Mammary epithelial cell (primary cell): ENCODE measurements at regions of chr20 and their contacts with region 1.

Region 1: GRCh38 chr20:9359561-9360308 is 154.7 kb upstream of the LAMP5 start:
- DNase-seq: peak; percentile 30
- H3K4me3 ChIP-seq: no peak overlapping the region
- H3K27ac ChIP-seq: no peak overlapping the region
- H3K4me1 ChIP-seq: no peaks in the 10 kb centered on the region
- H3K27me3 ChIP-seq: no peaks in the 10 kb centered on the region
- CTCF ChIP-seq: peak; percentile 29 to 55

Region 2: DNA sequence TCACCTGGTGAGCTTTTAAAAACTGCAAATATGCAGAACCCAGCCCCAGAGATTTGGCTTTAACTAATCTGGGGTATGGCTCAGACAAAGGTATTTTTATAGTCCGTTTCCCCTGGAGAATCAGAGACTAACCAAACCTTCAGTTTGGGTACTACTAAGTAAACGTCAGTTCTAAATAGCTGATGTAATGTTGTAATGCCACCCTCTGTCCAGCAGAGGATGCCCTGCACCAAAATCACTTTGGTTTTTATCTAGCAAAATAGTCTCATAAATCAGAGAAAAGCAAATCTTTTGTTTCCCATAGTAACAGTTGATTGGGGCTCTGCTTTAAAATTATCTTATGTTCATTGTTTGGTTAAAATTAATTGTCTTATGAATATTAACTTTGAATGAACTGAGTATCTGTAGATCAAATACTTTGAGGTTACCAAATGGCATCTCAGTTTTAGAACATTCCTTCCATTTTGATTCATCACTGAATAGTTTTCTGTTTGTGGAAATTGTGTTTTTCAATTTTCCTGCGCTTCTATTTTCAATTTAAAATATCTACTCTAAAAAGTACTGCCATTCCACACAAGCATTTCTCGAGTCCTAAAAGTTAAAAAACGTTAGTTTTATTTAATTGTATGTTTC is 569.2 kb before region 1 on chr20:
- CTCF ChIA-PET with region 1: no interaction called
- dilution Hi-C with region 1: no loop called
- in situ Hi-C with region 1: no loop called
- intact Hi-C with region 1: loop called (anchors 1 kb)
- DNase-seq: peak; percentile 13
- H3K4me3 ChIP-seq: no peak overlapping the region
- H3K27ac ChIP-seq: no peak overlapping the region
- H3K4me1 ChIP-seq: no peaks in the 10 kb centered on the region
- H3K27me3 ChIP-seq: no peaks in the 10 kb centered on the region
- CTCF ChIP-seq: peak; percentile 97 to 99

Region 3: GRCh38 chr20:8853805-8854338 is 505.9 kb before region 1 on chr20:
- CTCF ChIA-PET with region 1: interaction called, 3 read pairs
- dilution Hi-C with region 1: no loop called
- in situ Hi-C with region 1: loop called (anchors 10 to 25 kb)
- intact Hi-C with region 1: loop called (anchors 1 kb)
- DNase-seq: peak; percentile 60
- H3K4me3 ChIP-seq: no peak overlapping the region
- H3K27ac ChIP-seq: no peak overlapping the region
- H3K4me1 ChIP-seq: no peaks in the 10 kb centered on the region
- H3K27me3 ChIP-seq: peaks cover 2% of the 10 kb centered on the region
- CTCF ChIP-seq: peak; percentile 92 to 96

Region 4: GRCh38 chr20:8943631-8944030 is 416.1 kb before region 1 on chr20:
- CTCF ChIA-PET with region 1: no interaction called
- dilution Hi-C with region 1: no loop called
- in situ Hi-C with region 1: no loop called
- intact Hi-C with region 1: no loop called
- DNase-seq: no peak
- H3K4me3 ChIP-seq: no peak overlapping the region
- H3K27ac ChIP-seq: no peak overlapping the region
- H3K4me1 ChIP-seq: no peaks in the 10 kb centered on the region
- H3K27me3 ChIP-seq: no peaks in the 10 kb centered on the region
- CTCF ChIP-seq: no peak